RWPE1 (cell line): ENCODE measurements at regions of chr12 and their contacts with region 1.

Region 1: GRCh38 chr12:57124259-57124877 is 3.9 kb upstream of the LRP1 start:
- DNase-seq: peak; percentile 67
- H3K27ac ChIP-seq: no peak overlapping the region
- CTCF ChIP-seq: peak; percentile 95

Region 2: GRCh38 chr12:57169046-57169795 is 44.9 kb after region 1 on chr12:
- CTCF ChIA-PET with region 1: interaction called, 11 read pairs
- POLR2A ChIA-PET with region 1: interaction called, 3 read pairs
- DNase-seq: no peak
- H3K27ac ChIP-seq: peak overlapping the region; percentile 90
- CTCF ChIP-seq: no peak

Region 3: GRCh38 chr12:57175428-57176138 is 51.2 kb after region 1 on chr12:
- CTCF ChIA-PET with region 1: interaction called, 89 read pairs
- POLR2A ChIA-PET with region 1: interaction called, 11 read pairs
- DNase-seq: peak; percentile 95
- H3K27ac ChIP-seq: peak overlapping the region; percentile 97
- CTCF ChIP-seq: peak; percentile 94

Region 4: GRCh38 chr12:57182921-57183790 is 58.8 kb after region 1 on chr12:
- CTCF ChIA-PET with region 1: interaction called, 89 read pairs
- POLR2A ChIA-PET with region 1: interaction called, 3 read pairs
- DNase-seq: peak; percentile 93
- H3K27ac ChIP-seq: peak overlapping the region; percentile 64
- CTCF ChIP-seq: peak; percentile 88

Region 5: DNA sequence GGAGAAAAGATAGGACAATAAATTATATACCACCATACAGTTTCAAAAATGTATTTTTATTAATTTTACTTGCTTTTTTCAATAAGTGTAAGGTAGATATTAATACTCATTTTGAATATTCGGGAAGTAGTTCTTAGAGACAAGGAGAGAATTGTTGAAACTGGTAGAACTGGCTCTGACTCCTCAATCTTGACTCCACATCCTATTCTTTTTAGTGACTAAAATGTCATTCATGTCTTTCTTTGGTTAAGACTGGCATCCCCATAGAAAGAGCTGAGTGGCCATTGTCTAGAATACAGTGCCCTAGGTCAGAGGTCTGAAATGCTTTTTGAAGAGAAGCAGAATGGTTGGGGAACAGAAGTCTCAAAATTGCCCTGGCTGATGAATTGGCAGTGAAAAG is 1973.5 kb after region 1 on chr12:
- CTCF ChIA-PET with region 1: no interaction called
- POLR2A ChIA-PET with region 1: no interaction called
- DNase-seq: no peak
- H3K27ac ChIP-seq: no peak overlapping the region
- CTCF ChIP-seq: no peak